Left colon (tissue), 2 donors: ENCODE measurements at regions of chr5 and their contacts with region 1.

Region 1: GRCh38 chr5:127029581-127030258 is 638 bp downstream of the MARCHF3 start:
- DNase-seq: peak; percentile 77 to 80
- ATAC-seq: peak; percentile 67

Region 2: GRCh38 chr5:126776497-126777256 is 253.0 kb before region 1 on chr5 and contains the start of gene LMNB1:
- intact Hi-C with region 1: no loop called
- DNase-seq: peak; percentile 96
- ATAC-seq: peak; percentile 81
- total RNA-seq, gene LMNB1: 23.2 to 51.1 TPM

Region 3: DNA sequence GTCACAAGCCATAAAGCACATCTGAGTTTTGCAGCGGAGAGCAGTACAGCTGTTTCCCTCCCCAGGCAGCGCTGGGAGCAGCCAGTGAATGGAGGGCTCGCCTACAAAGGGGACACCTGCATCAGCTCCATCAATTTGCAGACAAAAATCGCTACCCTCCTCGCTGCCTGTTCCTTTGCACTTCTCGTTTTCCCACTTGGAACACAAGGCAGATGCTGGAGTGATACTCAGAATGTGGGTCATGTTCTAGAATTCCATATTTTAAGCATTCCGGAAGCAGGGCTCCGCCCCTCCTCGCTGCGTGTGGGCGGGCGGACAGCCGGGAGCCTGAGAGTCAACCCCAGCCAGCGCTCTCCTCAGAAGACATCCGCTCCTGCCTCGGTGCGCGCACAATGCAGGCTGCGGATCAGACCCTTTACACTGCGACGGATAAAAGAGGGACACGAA is 160.7 kb before region 1 on chr5:
- intact Hi-C with region 1: loop called in 1 of 2 experiments (anchors 10 kb)
- DNase-seq: no peak
- ATAC-seq: no peak